IMR-90 (cell line): ENCODE measurements at regions of chr17 and their contacts with region 1.

Region 1: DNA sequence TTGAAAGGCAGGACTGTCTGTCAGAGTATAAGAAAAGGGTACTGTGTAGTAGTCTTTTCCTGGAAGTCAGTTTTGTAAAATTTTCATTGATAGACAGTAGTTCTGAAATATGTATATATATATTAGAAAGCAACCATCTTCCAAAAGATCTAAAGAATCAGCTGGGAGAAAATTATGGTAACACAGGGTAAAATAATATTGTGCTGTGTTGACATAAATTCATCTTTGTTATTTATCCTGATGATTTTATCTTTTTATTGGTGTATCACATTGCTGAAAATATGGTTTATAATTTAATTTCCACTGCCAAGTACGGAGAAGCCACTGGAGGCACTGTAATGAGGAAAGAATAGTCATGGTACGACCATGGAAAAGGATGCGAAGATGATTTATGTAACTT is 324.9 kb downstream of the CA10 start:
- DNase-seq: no peak
- ATAC-seq: no peak
- H3K4me3 ChIP-seq: no peak overlapping the region
- H3K27ac ChIP-seq: no peak overlapping the region
- H3K4me1 ChIP-seq: no peaks in the 10 kb centered on the region
- H3K27me3 ChIP-seq: no peaks in the 10 kb centered on the region
- CTCF ChIP-seq: no peak
- POLR2A ChIP-seq: no peak
- RAD21 ChIP-seq: no peak

Region 2: GRCh38 chr17:51770031-51770759 is 63.4 kb before region 1 on chr17:
- CTCF ChIA-PET with region 1: no interaction called
- POLR2A ChIA-PET with region 1: no interaction called
- dilution Hi-C with region 1: no loop called
- in situ Hi-C with region 1: loop called (anchors 10 kb)
- intact Hi-C with region 1: no loop called
- DNase-seq: no peak
- ATAC-seq: no peak
- H3K4me3 ChIP-seq: no peak overlapping the region
- H3K27ac ChIP-seq: no peak overlapping the region
- H3K4me1 ChIP-seq: no peaks in the 10 kb centered on the region
- H3K27me3 ChIP-seq: no peaks in the 10 kb centered on the region
- CTCF ChIP-seq: no peak
- POLR2A ChIP-seq: no peak
- RAD21 ChIP-seq: no peak